ENCODE measurements at regions of chr10 and their contacts with region 1.

Region 1: GRCh38 chr10:33155720-33156638 is 178.5 kb downstream of the NRP1 start:
- DNase-seq: peak; percentile 99
- ATAC-seq: peak; percentile 96
- H3K4me3 ChIP-seq: no peak overlapping the region
- H3K27ac ChIP-seq: no peak overlapping the region
- H3K4me1 ChIP-seq: peaks cover 56% of the 10 kb centered on the region
- H3K27me3 ChIP-seq: no peaks in the 10 kb centered on the region
- CTCF ChIP-seq: peak; percentile 87
- EP300 ChIP-seq: peak; percentile 90 to 100
- POLR2A ChIP-seq: no peak
- RAD21 ChIP-seq: peak; percentile 50; the same call in 1 of the 2 replicates

Region 2: GRCh38 chr10:32795598-32796183 is 360.3 kb before region 1 on chr10:
- CTCF ChIA-PET with region 1: interaction called, 4 read pairs
- POLR2A ChIA-PET with region 1: no interaction called
- in situ Hi-C with region 1: no loop called
- intact Hi-C with region 1: loop called (anchors 10 kb)
- DNase-seq: peak; percentile 13
- ATAC-seq: peak; percentile 46; the same call in 2 of the 3 replicates
- H3K4me3 ChIP-seq: no peak overlapping the region
- H3K27ac ChIP-seq: no peak overlapping the region
- H3K4me1 ChIP-seq: no peaks in the 10 kb centered on the region
- H3K27me3 ChIP-seq: no peaks in the 10 kb centered on the region
- CTCF ChIP-seq: peak; percentile 76
- EP300 ChIP-seq: no peak
- POLR2A ChIP-seq: no peak
- RAD21 ChIP-seq: peak; percentile 46; the same call in 1 of the 2 replicates

Region 3: DNA sequence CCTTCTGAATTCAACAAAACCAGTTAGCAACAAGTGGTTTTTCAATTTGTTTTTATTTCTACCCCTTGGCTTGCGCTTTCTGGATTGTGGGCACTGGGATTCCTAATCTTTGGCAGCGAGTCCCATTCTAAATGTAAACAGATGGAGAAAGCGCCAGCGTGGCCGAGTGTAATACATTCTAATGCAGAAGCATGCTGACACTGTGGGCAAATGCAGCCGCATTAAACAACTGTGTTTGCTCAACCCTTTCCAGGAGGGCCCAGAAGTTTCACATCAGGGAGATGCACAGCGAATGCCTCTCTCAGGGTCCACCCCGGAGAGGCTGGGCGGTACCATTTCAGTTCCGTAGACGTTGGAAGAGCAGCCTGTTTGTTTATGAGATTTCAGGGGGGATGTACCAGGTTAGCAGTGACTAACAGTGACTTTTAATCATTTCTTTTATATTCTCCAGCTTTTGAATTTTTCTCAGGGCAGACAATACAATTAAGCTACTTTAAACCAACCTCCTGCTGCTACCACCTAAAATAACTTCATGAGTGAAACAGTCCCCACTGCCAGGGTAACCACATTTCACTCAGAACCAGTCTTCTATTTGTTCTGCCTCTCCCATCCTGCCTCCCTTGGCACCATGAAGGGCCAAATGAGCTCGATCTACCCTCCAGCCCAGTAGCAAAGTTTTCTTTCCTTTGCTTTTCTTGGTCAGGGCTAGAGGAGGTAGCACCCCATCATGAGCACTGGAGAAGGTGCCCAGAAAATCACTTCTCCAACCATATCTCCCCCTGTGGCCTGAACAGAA is 33.8 kb before region 1 on chr10:
- CTCF ChIA-PET with region 1: interaction called, 5 read pairs
- POLR2A ChIA-PET with region 1: no interaction called
- in situ Hi-C with region 1: no loop called
- intact Hi-C with region 1: loop called (anchors 5 kb)
- DNase-seq: no peak
- ATAC-seq: no peak
- H3K4me3 ChIP-seq: no peak overlapping the region
- H3K27ac ChIP-seq: no peak overlapping the region
- H3K4me1 ChIP-seq: no peaks in the 10 kb centered on the region
- H3K27me3 ChIP-seq: peaks cover 3 to 18% of the 10 kb centered on the region in 2 experiments; a peak in 3 of 5 replicates
- CTCF ChIP-seq: no peak
- EP300 ChIP-seq: no peak
- POLR2A ChIP-seq: no peak
- RAD21 ChIP-seq: no peak

Measured in HepG2 (cell line).